ENCODE measurements at regions of chr6 and their contacts with region 1.

Region 1: GRCh38 chr6:81075974-81076373 is 676.5 kb downstream of the TENT5A start:
- DNase-seq: peak in 1 of 2 experiments; percentile 5
- H3K4me3 ChIP-seq: no peak overlapping the region
- H3K4me3 Mint-ChIP-seq: no peak overlapping the region
- H3K27ac Mint-ChIP-seq: no peak overlapping the region
- H3K4me1 ChIP-seq: no peaks in the 10 kb centered on the region
- H3K4me1 Mint-ChIP-seq: no peaks in the 10 kb centered on the region
- H3K27me3 ChIP-seq: no peaks in the 10 kb centered on the region
- H3K27me3 Mint-ChIP-seq: no peaks in the 10 kb centered on the region
- CTCF ChIP-seq: peak; percentile 57 to 64

Region 2: DNA sequence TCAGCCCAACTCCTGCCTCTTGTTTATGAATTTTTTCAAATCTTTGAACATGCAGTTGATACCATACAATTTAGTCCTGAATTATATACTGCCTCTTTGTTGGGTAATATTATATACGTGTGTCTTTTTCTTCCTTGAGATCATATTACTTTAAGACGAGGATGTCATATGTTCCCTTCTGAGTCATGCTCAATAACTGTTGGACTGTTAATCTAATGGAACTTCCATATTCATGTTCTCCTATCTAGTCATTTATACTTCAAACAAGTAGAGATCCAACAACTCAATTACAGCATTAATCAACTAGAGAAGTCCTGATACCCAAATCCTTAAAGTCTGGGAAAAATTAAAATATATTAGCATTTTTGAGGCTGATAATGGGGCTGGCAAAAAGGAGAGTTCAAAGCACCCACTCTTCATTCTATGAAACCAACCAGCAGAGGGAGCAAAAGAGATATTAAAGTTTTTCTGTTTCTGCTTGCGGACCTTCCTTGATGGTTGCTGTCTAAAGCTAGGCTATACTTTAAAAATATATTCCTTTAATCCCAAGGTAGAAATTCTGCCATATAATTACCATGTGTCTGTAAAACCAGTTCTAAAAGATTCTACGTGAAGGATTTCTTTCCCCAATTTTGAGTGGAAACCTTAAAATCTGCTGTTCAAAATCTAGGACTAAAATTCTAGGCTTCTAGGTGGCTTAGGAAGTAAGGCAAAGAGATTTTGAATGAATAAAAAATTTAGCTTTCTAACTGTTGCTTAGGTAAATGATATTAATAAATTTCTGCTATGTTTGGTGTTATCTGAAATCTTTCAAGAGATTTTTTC is 470.6 kb before region 1 on chr6:
- CTCF ChIA-PET with region 1: no interaction called
- POLR2A ChIA-PET with region 1: no interaction called
- intact Hi-C with region 1: loop called (anchors 1 kb)
- DNase-seq: peak in 1 of 2 experiments; percentile 39
- H3K4me3 ChIP-seq: no peak overlapping the region
- H3K4me3 Mint-ChIP-seq: no peak overlapping the region
- H3K27ac Mint-ChIP-seq: no peak overlapping the region
- H3K4me1 ChIP-seq: no peaks in the 10 kb centered on the region
- H3K4me1 Mint-ChIP-seq: no peaks in the 10 kb centered on the region
- H3K27me3 ChIP-seq: no peaks in the 10 kb centered on the region
- H3K27me3 Mint-ChIP-seq: peaks cover 13% of the 10 kb centered on the region
- CTCF ChIP-seq: peak; percentile 59 to 64

Region 3: DNA sequence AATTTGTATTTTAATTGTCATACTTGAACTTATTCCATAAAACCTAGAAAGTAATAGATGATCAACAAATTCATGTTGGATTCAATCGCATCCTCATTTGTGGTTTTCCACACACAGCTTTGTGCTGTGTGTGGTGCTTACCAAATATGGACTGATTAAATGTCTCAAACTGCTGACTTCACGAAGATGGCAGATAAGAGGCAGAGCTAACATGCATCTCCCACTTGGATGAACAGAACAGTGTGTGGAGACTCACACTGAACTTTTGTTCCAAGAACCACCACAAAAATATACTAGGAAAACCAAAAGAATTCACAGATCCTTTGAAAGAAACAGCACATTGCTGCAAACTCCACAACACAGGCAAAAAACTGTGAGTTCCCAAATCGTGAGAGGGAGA is 72.8 kb after region 1 on chr6:
- CTCF ChIA-PET with region 1: no interaction called
- POLR2A ChIA-PET with region 1: no interaction called
- intact Hi-C with region 1: no loop called
- DNase-seq: no peak
- H3K4me3 ChIP-seq: no peak overlapping the region
- H3K4me3 Mint-ChIP-seq: no peak overlapping the region
- H3K27ac Mint-ChIP-seq: no peak overlapping the region
- H3K4me1 ChIP-seq: no peaks in the 10 kb centered on the region
- H3K4me1 Mint-ChIP-seq: no peaks in the 10 kb centered on the region
- H3K27me3 ChIP-seq: no peaks in the 10 kb centered on the region
- H3K27me3 Mint-ChIP-seq: no peaks in the 10 kb centered on the region
- CTCF ChIP-seq: no peak

Region 4: DNA sequence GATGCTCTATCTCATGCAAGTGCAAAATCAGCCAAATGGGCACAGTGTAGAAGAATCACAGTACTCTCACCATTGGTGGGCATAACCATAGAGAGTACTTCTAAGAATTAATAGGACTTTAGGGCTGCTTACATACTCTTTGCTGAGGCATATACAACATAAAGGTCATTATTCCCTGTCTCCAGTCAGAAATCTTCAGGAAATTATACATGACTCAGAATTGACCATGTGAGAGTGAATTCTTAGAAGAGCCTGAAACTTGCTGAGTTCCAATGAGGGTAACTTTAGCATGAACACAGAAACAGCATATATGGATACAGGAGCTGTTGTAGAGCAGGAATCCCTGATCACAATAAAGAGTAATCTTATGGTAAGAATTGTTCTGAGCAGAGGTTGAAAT is 177.8 kb after region 1 on chr6:
- CTCF ChIA-PET with region 1: no interaction called
- POLR2A ChIA-PET with region 1: no interaction called
- intact Hi-C with region 1: no loop called
- DNase-seq: no peak
- H3K4me3 ChIP-seq: no peak overlapping the region
- H3K4me3 Mint-ChIP-seq: no peak overlapping the region
- H3K27ac Mint-ChIP-seq: no peak overlapping the region
- H3K4me1 ChIP-seq: no peaks in the 10 kb centered on the region
- H3K4me1 Mint-ChIP-seq: no peaks in the 10 kb centered on the region
- H3K27me3 ChIP-seq: no peaks in the 10 kb centered on the region
- H3K27me3 Mint-ChIP-seq: no peaks in the 10 kb centered on the region
- CTCF ChIP-seq: no peak

Measured in Caco-2 (cell line).